Left cardiac atrium (tissue), 4 donors: ENCODE measurements at regions of chr12 and their contacts with region 1.

Region 1: DNA sequence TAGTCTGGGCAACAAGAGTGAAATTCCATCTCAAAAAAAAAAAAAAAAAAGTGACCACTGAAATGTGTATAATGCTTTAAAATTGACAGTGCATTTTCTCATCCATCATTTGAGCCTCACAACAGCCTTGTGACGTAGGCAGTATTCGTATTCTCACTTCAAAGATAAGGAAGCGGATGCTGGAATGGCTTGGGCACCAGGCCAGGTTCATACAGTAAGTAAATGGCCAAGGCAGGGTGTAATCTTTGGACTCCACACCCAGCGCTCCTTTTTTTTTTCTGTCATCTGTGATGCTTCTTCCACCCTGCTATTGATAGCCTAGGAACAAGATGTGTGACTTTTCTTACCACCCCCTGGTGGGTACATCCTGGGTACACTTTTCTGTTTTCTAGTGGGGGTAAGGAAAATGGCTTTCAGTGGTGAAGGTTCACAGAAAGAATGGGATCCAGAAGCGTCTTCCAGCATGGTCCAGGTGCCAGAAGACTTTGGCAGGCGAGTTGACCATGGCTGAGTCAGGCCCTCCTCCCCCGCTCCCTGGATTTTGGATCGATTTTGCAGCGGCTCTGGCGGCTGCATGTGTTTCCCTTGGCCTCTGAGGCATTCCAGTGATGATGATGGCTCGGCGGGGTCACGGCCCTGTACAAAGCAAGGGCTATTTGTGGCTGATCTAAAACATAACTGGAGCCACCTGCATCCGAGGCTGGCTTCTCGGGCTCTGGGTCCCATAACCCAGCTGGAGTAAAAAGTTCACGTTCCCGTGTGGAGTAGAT is 110.6 kb downstream of the CACNA1C start:
- DNase-seq: peak; percentile 93
- ATAC-seq: peak; percentile 90 to 92

Region 2: GRCh38 chr12:2057041-2057794 is 106.1 kb before region 1 on chr12:
- intact Hi-C with region 1: loop called in 1 of 2 experiments (anchors 10 kb)
- DNase-seq: peak; percentile 74
- ATAC-seq: peak in 1 of 2 donors; percentile 36

Region 3: DNA sequence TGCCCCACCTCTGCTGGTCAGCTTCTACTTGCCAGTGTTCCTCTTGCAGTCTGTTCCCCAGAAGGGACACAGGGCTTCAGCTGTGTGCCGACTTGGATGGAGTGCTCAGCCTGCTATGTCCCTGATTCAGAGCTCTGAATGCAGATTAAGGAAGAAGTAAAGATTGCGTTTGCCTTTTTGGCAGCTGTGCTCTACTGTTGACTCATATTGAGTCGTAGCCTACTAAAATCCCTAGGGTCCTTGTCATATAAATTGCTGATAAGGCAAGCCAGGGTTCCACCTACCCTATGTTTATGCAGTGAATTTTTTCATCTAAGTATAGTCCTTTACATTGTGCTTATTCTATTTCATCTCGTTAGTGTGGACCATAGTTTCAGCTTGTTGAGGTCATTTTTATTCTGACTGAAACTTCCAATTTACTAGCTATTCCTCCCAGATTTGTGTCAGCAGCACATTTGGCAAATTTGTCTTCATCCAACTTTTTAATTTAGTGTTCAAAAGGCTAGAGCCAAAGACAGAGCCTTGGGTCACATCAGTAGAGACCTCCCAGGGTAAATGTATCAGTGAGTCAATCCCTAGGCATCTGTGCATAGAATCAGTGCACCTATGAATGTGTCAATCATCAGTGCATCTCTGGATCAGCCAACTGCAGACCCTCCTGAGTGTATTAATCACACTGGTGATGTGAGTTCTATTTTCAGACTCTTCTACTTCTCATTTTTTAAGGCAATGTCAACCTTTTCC is 78.6 kb before region 1 on chr12:
- intact Hi-C with region 1: loop called in 1 of 2 experiments (anchors 10 kb)
- DNase-seq: peak; percentile 61
- ATAC-seq: peak; percentile 80 to 91

Region 4: GRCh38 chr12:2284857-2285256 is 121.5 kb after region 1 on chr12:
- intact Hi-C with region 1: loop called in 1 of 2 experiments (anchors 10 kb)
- DNase-seq: peak; percentile 81
- ATAC-seq: peak; percentile 79 to 89